ENCODE measurements at regions of chr14 and their contacts with region 1.

Region 1: DNA sequence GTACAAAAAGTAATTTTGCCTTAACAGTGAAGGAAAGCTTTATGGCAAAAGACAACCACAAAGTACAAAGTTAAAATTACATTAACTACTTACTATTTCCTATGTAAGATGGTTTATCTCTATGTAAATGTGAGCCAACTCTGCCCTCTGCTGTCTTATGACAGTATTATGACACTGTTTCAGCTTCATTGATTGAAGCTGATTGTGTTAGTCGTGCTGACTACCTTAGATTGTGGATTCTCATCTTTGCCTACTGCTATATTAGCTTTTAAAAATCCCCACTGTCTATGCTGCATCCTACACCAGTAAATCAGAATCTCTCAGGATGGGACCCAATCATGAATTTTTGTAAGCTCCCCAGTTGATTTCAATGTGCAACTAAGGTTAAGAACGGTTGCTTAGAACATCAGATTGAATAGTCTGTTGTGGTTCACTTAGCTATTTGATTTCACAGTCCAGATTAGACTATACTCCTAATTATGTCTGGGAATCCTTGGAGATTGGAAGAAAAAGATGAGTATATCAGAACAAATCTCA is 12.2 kb upstream of the SPTB start:
- DNase-seq: peak; percentile 23 to 63
- H3K4me3 ChIP-seq: no peak overlapping the region
- H3K27ac ChIP-seq: no peak overlapping the region
- H3K4me1 ChIP-seq: no peaks in the 10 kb centered on the region
- H3K27me3 ChIP-seq: no peaks in the 10 kb centered on the region
- CTCF ChIP-seq: peak; percentile 89

Region 2: GRCh38 chr14:63972323-63972932 is 919.5 kb before region 1 on chr14:
- CTCF ChIA-PET with region 1: interaction called, 14 read pairs
- POLR2A ChIA-PET with region 1: no interaction called
- intact Hi-C with region 1: no loop called
- DNase-seq: no peak
- H3K4me3 ChIP-seq: no peak overlapping the region
- H3K27ac ChIP-seq: no peak overlapping the region
- H3K4me1 ChIP-seq: no peaks in the 10 kb centered on the region
- H3K27me3 ChIP-seq: no peaks in the 10 kb centered on the region
- CTCF ChIP-seq: no peak

Region 3: GRCh38 chr14:64349741-64350490 is 542.0 kb before region 1 on chr14:
- CTCF ChIA-PET with region 1: no interaction called
- POLR2A ChIA-PET with region 1: no interaction called
- intact Hi-C with region 1: loop called (anchors 5 kb)
- DNase-seq: no peak
- H3K4me3 ChIP-seq: no peak overlapping the region
- H3K27ac ChIP-seq: no peak overlapping the region
- H3K4me1 ChIP-seq: no peaks in the 10 kb centered on the region
- H3K27me3 ChIP-seq: no peaks in the 10 kb centered on the region
- CTCF ChIP-seq: no peak

Region 4: GRCh38 chr14:64800000-64800399 is 91.9 kb before region 1 on chr14:
- CTCF ChIA-PET with region 1: interaction called, 19 read pairs
- POLR2A ChIA-PET with region 1: interaction called, 10 read pairs
- intact Hi-C with region 1: loop called (anchors 5 kb)
- DNase-seq: peak in 1 of 2 experiments; percentile 42
- H3K4me3 ChIP-seq: no peak overlapping the region
- H3K27ac ChIP-seq: no peak overlapping the region
- H3K4me1 ChIP-seq: peaks cover 9% of the 10 kb centered on the region
- H3K27me3 ChIP-seq: no peaks in the 10 kb centered on the region
- CTCF ChIP-seq: peak; percentile 81

Region 5: GRCh38 chr14:64823305-64823861 is 68.5 kb before region 1 on chr14:
- CTCF ChIA-PET with region 1: interaction called, 65 read pairs
- POLR2A ChIA-PET with region 1: no interaction called
- intact Hi-C with region 1: loop called (anchors 5 kb)
- DNase-seq: peak; percentile 56 to 74
- H3K4me3 ChIP-seq: no peak overlapping the region; the same call in 1 of the 2 replicates
- H3K27ac ChIP-seq: no peak overlapping the region
- H3K4me1 ChIP-seq: no peaks in the 10 kb centered on the region
- H3K27me3 ChIP-seq: peaks cover 10% of the 10 kb centered on the region; the same call in 1 of the 2 replicates
- CTCF ChIP-seq: peak; percentile 90

Region 6: DNA sequence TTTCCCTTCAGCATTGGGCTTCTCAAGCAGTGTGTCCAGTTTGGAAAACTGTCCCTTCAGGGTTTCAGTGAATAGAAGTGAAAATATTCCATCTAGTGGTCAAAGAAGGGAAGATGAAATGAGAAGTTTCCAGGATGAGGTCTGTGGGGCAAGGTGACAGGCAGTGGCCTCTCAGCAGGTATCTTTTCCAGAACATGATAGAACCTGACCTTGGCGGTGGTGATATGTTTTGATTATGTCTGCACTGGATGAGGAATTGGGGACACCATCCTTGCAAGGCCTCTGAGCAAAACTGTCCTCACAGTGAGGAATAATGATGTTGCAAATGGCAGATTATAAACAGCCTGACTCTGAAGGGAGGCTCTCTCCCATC is 45.9 kb after region 1 on chr14:
- CTCF ChIA-PET with region 1: no interaction called
- POLR2A ChIA-PET with region 1: no interaction called
- intact Hi-C with region 1: no loop called
- DNase-seq: peak in 1 of 2 experiments; percentile 42
- H3K4me3 ChIP-seq: no peak overlapping the region
- H3K27ac ChIP-seq: peak overlapping the region; percentile 4; the same call in 1 of the 2 replicates
- H3K4me1 ChIP-seq: peaks cover 26% of the 10 kb centered on the region
- H3K27me3 ChIP-seq: no peaks in the 10 kb centered on the region
- CTCF ChIP-seq: peak; percentile 63

Region 7: GRCh38 chr14:65297744-65298143 is 405.8 kb after region 1 on chr14:
- CTCF ChIA-PET with region 1: no interaction called
- POLR2A ChIA-PET with region 1: no interaction called
- intact Hi-C with region 1: no loop called
- DNase-seq: peak in 1 of 2 experiments; percentile 57
- H3K4me3 ChIP-seq: no peak overlapping the region
- H3K27ac ChIP-seq: no peak overlapping the region
- H3K4me1 ChIP-seq: peaks cover 34% of the 10 kb centered on the region
- H3K27me3 ChIP-seq: no peaks in the 10 kb centered on the region
- CTCF ChIP-seq: no peak

Region 8: GRCh38 chr14:65791191-65791981 is 899.5 kb after region 1 on chr14:
- CTCF ChIA-PET with region 1: no interaction called
- POLR2A ChIA-PET with region 1: no interaction called
- intact Hi-C with region 1: no loop called
- DNase-seq: peak; percentile 23 to 62
- H3K4me3 ChIP-seq: no peak overlapping the region
- H3K27ac ChIP-seq: peak overlapping the region; percentile 57
- H3K4me1 ChIP-seq: peaks cover 14% of the 10 kb centered on the region
- H3K27me3 ChIP-seq: no peaks in the 10 kb centered on the region
- CTCF ChIP-seq: no peak